ENCODE measurements at regions of chr11 and their contacts with region 1.

Region 1: GRCh38 chr11:102399189-102399588 is 52.2 kb downstream of the BIRC2 start:
- DNase-seq: no peak
- ATAC-seq: no peak
- H3K4me3 ChIP-seq: no peak overlapping the region
- H3K4me3 Mint-ChIP-seq: no peak overlapping the region
- H3K27ac ChIP-seq: no peak overlapping the region
- H3K27ac Mint-ChIP-seq: peak overlapping the region; percentile 23 to 39
- H3K4me1 ChIP-seq: peaks cover 6 to 8% of the 10 kb centered on the region in 2 experiments
- H3K4me1 Mint-ChIP-seq: peaks cover 60 to 64% (median 60%) of the 10 kb centered on the region in 3 donors
- H3K27me3 ChIP-seq: no peaks in the 10 kb centered on the region
- H3K27me3 Mint-ChIP-seq: no peaks in the 10 kb centered on the region

Region 2: DNA sequence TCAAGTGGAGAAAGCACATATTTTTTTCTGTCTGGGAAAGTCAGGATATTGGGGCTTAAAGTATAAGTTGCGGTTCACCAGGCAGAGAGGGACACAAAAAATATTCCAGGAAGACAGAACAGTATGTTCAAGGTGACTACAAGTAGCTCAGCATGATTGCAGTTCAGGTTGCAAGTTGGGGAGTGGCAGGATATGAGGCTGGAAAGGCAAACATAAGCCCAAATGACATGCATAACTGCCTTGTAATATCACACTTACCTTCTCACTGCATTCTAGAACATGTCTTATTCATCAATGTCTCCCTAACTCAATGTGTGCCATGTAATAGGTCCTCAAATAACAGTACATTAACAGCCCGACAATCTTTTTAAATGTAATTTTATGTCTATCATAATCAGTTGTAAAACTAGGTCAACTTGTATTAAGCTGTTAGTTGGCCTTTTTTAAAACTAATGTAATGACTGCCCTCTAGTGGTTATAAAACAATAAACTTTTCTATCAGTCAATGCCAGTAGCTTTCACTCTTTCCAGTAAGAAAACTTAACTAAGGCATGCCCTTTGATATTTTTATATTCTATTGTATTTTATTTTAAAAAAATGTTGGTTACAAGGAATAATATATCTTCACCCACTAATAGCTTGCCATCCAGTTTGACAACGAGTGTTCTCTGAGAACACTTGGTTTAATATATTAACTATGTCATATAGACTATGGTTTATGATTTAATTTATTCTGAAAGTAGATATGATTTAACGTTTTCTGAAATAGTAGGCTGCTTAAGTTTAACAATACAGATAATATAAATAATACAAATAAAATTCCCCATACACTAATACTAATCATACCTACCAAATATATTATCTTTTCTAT is 391.4 kb before region 1 on chr11:
- CTCF ChIA-PET with region 1: no interaction called
- POLR2A ChIA-PET with region 1: no interaction called
- DNase-seq: peak in 1 of 35 experiments; percentile 42
- ATAC-seq: no peak
- H3K4me3 ChIP-seq: no peak overlapping the region
- H3K4me3 Mint-ChIP-seq: no peak overlapping the region
- H3K27ac ChIP-seq: no peak overlapping the region
- H3K27ac Mint-ChIP-seq: no peak overlapping the region
- H3K4me1 ChIP-seq: no peaks in the 10 kb centered on the region
- H3K4me1 Mint-ChIP-seq: peaks cover 3 to 6% (median 4%) of the 10 kb centered on the region in 3 donors
- H3K27me3 ChIP-seq: peaks cover 0 to 10% of the 10 kb centered on the region in 2 experiments
- H3K27me3 Mint-ChIP-seq: peaks cover 10 to 15% of the 10 kb centered on the region in 2 donors

Region 3: GRCh38 chr11:102187416-102188151 is 211.6 kb before region 1 on chr11:
- CTCF ChIA-PET with region 1: no interaction called
- POLR2A ChIA-PET with region 1: no interaction called
- DNase-seq: no peak
- ATAC-seq: no peak
- H3K4me3 ChIP-seq: no peak overlapping the region
- H3K4me3 Mint-ChIP-seq: no peak overlapping the region
- H3K27ac ChIP-seq: no peak overlapping the region
- H3K27ac Mint-ChIP-seq: no peak overlapping the region
- H3K4me1 ChIP-seq: no peaks in the 10 kb centered on the region
- H3K4me1 Mint-ChIP-seq: no peaks in the 10 kb centered on the region
- H3K27me3 ChIP-seq: peaks cover 0 to 3% of the 10 kb centered on the region in 2 experiments
- H3K27me3 Mint-ChIP-seq: peaks cover 10 to 26% of the 10 kb centered on the region in 2 donors

Region 4: GRCh38 chr11:102422817-102423712 is 23.9 kb after region 1 on chr11:
- CTCF ChIA-PET with region 1: interaction called in 1 of 2 experiments, 3 read pairs
- POLR2A ChIA-PET with region 1: interaction called in 1 of 2 experiments, 10 read pairs
- DNase-seq: peak in 1 of 35 experiments; percentile 35
- ATAC-seq: peak; percentile 15 to 66 (median 60)
- H3K4me3 ChIP-seq: no peak overlapping the region
- H3K4me3 Mint-ChIP-seq: peak overlapping the region in 1 of 3 donors; percentile 67
- H3K27ac ChIP-seq: peak overlapping the region; percentile 48
- H3K27ac Mint-ChIP-seq: peak overlapping the region; percentile 86 to 89
- H3K4me1 ChIP-seq: peaks cover 40 to 62% of the 10 kb centered on the region in 2 experiments
- H3K4me1 Mint-ChIP-seq: peaks cover 92 to 95% (median 93%) of the 10 kb centered on the region in 3 donors
- H3K27me3 ChIP-seq: no peaks in the 10 kb centered on the region
- H3K27me3 Mint-ChIP-seq: no peaks in the 10 kb centered on the region

Region 5: DNA sequence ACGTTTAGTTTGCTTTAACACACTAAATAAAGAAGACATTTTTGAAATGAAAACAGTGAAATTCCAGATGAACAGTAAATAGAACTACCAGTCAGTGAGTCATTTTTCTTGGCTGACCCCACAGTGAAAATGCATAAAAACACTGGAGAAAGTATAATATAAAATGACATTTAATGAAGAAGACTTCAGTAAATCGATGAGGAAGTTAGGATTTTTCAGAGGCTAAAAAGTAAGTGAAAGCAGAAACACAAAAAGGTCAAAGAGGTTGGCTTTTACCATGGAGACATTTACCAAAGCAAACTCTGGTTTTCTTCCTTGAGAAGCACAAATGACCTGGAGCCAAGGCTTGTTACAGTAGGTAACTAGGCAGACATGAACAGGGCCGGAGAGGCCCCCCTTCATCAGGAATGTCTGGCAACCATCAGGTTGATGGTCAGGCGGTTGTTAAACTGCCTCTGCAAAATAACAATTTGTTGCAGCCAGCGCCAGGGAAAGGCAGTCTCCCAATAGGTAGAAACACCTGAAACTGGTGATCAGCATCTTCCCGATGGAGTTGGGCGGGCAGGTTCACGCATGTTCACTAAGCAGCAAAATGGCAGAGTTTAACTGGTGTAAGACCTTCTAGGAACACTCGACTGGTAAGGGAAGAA is 70.1 kb after region 1 on chr11:
- CTCF ChIA-PET with region 1: no interaction called
- POLR2A ChIA-PET with region 1: no interaction called
- DNase-seq: no peak
- ATAC-seq: no peak
- H3K4me3 ChIP-seq: no peak overlapping the region
- H3K4me3 Mint-ChIP-seq: peak overlapping the region in 1 of 3 donors; percentile 61
- H3K27ac ChIP-seq: no peak overlapping the region
- H3K27ac Mint-ChIP-seq: peak overlapping the region; percentile 3 to 70
- H3K4me1 ChIP-seq: peaks cover 48 to 68% of the 10 kb centered on the region in 2 experiments
- H3K4me1 Mint-ChIP-seq: peaks cover 97 to 100% (median 99%) of the 10 kb centered on the region in 3 donors
- H3K27me3 ChIP-seq: no peaks in the 10 kb centered on the region
- H3K27me3 Mint-ChIP-seq: no peaks in the 10 kb centered on the region

Region 6: GRCh38 chr11:102577182-102577581 is 178.0 kb after region 1 on chr11:
- CTCF ChIA-PET with region 1: no interaction called
- POLR2A ChIA-PET with region 1: no interaction called
- DNase-seq: peak in 1 of 35 experiments; percentile 31
- ATAC-seq: peak; percentile 43 to 78 (median 68)
- H3K4me3 ChIP-seq: no peak overlapping the region
- H3K4me3 Mint-ChIP-seq: peak overlapping the region in 1 of 3 donors; percentile 18
- H3K27ac ChIP-seq: no peak overlapping the region
- H3K27ac Mint-ChIP-seq: peak overlapping the region; percentile 47 to 63
- H3K4me1 ChIP-seq: peaks cover 3 to 18% of the 10 kb centered on the region in 2 experiments
- H3K4me1 Mint-ChIP-seq: peaks cover 22 to 27% (median 24%) of the 10 kb centered on the region in 3 donors
- H3K27me3 ChIP-seq: no peaks in the 10 kb centered on the region
- H3K27me3 Mint-ChIP-seq: no peaks in the 10 kb centered on the region